A549 (cell line): ENCODE measurements at regions of chr10 and their contacts with region 1.

Region 1: GRCh38 chr10:92897916-92898315 is 49.6 kb downstream of the EXOC6 start:
- DNase-seq: no peak
- ATAC-seq: no peak
- H3K4me3 ChIP-seq: no peak overlapping the region
- H3K27ac ChIP-seq: no peak overlapping the region
- H3K4me1 ChIP-seq: peaks cover 39% of the 10 kb centered on the region
- CTCF ChIP-seq: no peak
- EP300 ChIP-seq: no peak
- POLR2A ChIP-seq: no peak
- RAD21 ChIP-seq: no peak

Region 2: DNA sequence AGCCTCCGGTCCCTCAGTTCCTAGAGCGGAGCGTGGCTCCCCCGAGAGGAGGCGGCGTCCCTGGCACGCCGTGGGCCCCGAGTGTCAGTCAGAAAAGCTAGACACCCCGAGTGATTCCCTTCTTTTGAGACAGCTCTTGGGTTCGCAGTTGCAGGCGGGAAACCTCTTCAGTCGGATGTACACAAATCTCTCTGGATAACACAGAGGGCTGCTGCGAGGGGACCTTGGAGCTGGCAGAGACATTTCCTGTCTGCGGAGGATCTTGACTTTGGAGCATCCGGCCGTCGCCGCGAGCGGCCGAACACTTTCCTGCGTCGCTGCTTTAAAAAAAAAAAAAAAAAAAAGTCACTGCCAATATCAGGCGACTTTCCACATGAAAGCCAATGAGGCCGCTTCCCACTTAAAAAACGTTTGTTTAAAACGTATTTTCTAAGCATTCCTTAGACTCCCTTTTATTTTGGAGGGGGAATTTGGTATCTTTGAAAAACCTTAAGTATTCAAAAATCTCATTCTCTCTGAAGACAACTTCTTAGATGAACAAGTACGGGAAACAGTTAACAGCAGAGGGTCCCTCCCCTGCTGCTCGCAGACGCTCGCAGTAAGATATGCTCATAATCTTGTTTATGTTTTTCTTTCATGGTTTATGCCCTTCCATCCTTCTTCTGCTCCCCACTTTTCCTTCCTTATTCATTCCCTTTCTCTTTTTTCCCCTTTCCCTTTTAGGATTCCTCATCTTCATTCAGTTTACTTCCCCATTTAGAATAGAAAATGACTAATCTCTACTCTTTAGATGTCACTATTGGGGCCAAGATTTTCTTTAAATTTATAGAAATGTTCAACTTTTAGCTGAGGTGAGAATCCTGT is 198.2 kb before region 1 on chr10:
- CTCF ChIA-PET with region 1: no interaction called
- POLR2A ChIA-PET with region 1: no interaction called
- DNase-seq: peak; percentile 41 to 71
- ATAC-seq: peak; percentile 58 to 61
- H3K4me3 ChIP-seq: peak overlapping the region; percentile 42
- H3K27ac ChIP-seq: peak overlapping the region; percentile 82 to 92
- H3K4me1 ChIP-seq: peaks cover 52% of the 10 kb centered on the region
- CTCF ChIP-seq: no peak
- EP300 ChIP-seq: no peak
- POLR2A ChIP-seq: 0 out of 2 replicates have a peak, but pooled peaks have one; percentile 20
- RAD21 ChIP-seq: no peak; a peak in 1 of 5 replicates

Region 3: DNA sequence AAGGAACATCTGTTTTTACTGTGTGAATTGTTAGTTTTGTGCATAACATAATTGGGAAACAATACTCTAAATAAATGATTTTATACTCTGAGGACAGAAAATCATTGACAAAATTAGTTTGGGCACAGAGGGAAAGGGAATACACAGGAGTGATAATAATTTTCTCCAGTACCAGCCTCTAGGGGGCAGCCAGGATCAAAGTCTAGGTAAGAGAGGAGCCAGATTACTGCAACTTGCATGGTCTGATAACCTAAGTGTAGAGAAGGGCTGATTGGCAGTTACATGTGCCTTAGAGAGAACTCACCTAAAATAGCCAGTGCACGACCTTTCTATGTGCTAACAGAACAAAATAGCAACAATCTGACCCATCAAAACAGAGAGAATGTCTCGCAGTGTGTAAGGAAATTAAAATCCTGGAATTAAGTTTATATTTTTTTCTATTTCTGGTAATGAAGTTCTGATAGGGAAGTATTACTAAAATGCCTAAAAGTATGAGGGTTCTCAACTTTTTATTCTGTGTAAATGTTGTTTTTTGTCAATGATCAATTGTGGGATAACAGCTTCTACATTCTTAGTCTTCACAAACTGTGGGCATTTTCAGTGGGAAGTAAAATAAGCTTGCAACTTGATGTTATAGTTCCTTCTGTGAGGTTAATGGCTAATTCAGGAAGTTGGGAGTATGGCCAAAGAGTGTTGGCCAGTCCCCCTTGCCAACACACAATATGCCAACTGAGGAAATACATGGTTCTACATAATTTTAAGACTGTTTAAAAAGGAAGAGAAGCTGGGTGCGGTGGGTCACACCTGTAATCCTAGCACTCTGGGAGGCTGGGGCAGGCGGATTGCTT is 16.8 kb after region 1 on chr10:
- CTCF ChIA-PET with region 1: interaction called, 15 read pairs
- POLR2A ChIA-PET with region 1: no interaction called
- DNase-seq: peak; percentile 53 to 65
- ATAC-seq: peak; percentile 99
- H3K4me3 ChIP-seq: no peak overlapping the region
- H3K27ac ChIP-seq: no peak overlapping the region
- H3K4me1 ChIP-seq: peaks cover 3% of the 10 kb centered on the region; the same call in 1 of the 3 replicates
- CTCF ChIP-seq: peak; percentile 73
- EP300 ChIP-seq: no peak
- POLR2A ChIP-seq: no peak
- RAD21 ChIP-seq: peak; percentile 55 to 63